PC-9 (cell line): ENCODE measurements at regions of chr12 and their contacts with region 1.

Region 1: GRCh38 chr12:47377414-47378221 is 297.9 kb upstream of the AMIGO2 start:
- DNase-seq: peak in 1 of 2 experiments; percentile 59
- H3K4me3 ChIP-seq: no peak overlapping the region
- H3K27ac ChIP-seq: no peak overlapping the region
- H3K4me1 ChIP-seq: peaks cover 11% of the 10 kb centered on the region
- H3K27me3 ChIP-seq: no peaks in the 10 kb centered on the region
- CTCF ChIP-seq: no peak

Region 2: GRCh38 chr12:47216150-47216677 is 161.4 kb before region 1 on chr12:
- CTCF ChIA-PET with region 1: no interaction called
- POLR2A ChIA-PET with region 1: no interaction called
- intact Hi-C with region 1: no loop called
- DNase-seq: no peak
- H3K4me3 ChIP-seq: no peak overlapping the region
- H3K27ac ChIP-seq: no peak overlapping the region
- H3K4me1 ChIP-seq: peaks cover 47% of the 10 kb centered on the region
- H3K27me3 ChIP-seq: no peaks in the 10 kb centered on the region
- CTCF ChIP-seq: no peak

Region 3: DNA sequence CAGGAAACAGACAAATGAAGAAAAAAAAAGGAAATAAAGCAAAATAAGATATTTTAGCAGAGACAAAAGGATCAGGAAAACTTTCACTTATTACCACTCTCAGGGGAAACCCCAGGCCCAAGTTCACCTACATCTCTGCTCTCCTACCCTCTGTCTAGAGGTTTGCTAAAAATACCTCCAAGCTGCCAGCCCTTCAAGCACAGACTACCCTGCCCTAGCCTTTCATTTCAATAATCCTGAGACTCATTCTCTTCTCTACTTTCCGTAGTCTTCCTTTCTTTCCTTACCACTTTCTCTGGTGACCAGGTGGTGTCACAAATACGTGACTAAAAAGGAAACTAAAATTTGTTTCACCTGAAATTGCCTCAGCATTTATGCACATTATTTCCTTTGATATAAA is 294.4 kb after region 1 on chr12:
- CTCF ChIA-PET with region 1: no interaction called
- POLR2A ChIA-PET with region 1: interaction called, 14 read pairs
- intact Hi-C with region 1: no loop called
- DNase-seq: no peak
- H3K4me3 ChIP-seq: no peak overlapping the region
- H3K27ac ChIP-seq: no peak overlapping the region
- H3K4me1 ChIP-seq: no peaks in the 10 kb centered on the region
- H3K27me3 ChIP-seq: no peaks in the 10 kb centered on the region
- CTCF ChIP-seq: no peak